CD8-positive, alpha-beta T cell (primary cell): ENCODE measurements at regions of chr2 and their contacts with region 1.

Region 1: DNA sequence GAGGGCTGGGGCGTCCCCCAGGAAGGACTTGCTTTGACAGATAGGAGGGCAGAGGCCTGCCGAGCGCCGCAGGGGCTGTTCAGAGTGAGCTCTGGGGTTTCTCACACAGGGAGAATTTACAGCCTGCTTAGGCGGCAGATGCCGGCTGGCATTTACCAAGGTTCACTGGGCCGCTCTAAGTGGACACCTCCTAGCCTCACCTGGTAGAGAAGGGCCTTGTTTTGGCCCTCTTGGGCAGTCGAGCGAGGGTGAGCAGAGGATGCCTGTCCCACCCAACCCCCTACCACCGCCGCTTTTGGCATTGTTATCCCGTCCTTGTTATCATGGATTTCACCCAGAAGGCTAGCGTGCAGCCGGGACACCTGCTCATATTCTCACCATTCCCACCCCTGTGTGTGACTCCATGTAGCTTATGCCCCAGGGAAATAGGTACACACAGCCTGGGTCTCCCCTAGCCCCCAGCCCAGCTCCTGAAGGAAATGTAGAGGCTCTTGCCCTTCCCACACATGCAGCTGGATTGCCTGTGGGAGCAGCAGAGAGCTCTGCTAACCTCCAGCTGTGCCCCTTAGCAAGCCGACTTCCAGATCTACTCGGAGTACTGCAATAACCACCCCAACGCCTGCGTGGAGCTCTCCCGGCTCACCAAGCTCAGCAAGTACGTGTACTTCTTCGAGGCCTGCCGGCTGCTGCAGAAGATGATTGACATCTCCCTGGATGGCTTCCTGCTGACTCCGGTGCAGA is 52.4 kb downstream of the FAM168B start:
- DNase-seq: peak in 5 of 9 experiments; percentile 27 to 57 (median 40)
- ATAC-seq: peak; percentile 53
- H3K4me3 ChIP-seq: peak overlapping the region; percentile 67 to 68
- H3K4me3 Mint-ChIP-seq: peak overlapping the region; percentile 93
- H3K27ac ChIP-seq: peak overlapping the region; percentile 46 to 56
- H3K27ac Mint-ChIP-seq: peak overlapping the region; percentile 86
- H3K4me1 ChIP-seq: peaks cover 33% of the 10 kb centered on the region
- H3K4me1 Mint-ChIP-seq: peaks cover 56% of the 10 kb centered on the region
- H3K27me3 ChIP-seq: no peaks in the 10 kb centered on the region
- H3K27me3 Mint-ChIP-seq: no peaks in the 10 kb centered on the region
- CTCF ChIP-seq: no peak

Region 2: DNA sequence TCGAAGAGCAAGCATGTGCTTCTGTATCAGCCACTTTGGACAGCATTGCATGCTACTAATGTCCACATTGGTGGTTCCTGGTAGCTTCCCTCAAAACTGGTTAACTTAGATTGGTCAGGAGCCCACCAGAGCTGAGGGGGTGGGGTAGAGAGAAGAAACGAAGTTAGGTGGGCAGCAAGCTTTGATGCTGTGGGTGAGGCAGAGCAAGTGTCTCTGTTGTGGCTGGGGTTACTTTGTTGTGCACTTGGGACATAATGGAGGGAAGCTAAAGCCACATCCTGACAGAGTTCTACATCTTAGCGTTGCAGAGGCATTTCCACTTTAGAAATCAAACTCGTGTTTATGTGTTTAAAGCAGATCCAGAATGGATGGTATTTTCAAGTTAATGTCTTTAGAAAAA is 30.3 kb before region 1 on chr2:
- CTCF ChIA-PET with region 1: interaction called, 4 read pairs
- POLR2A ChIA-PET with region 1: interaction called, 18 read pairs
- intact Hi-C with region 1: no loop called
- DNase-seq: peak in 4 of 9 experiments; percentile 20 to 66 (median 42)
- ATAC-seq: peak; percentile 78
- H3K4me3 ChIP-seq: peak overlapping the region in 1 of 2 experiments; percentile 10
- H3K4me3 Mint-ChIP-seq: peak overlapping the region; percentile 67
- H3K27ac ChIP-seq: no peak overlapping the region
- H3K27ac Mint-ChIP-seq: peak overlapping the region; percentile 53
- H3K4me1 ChIP-seq: peaks cover 29% of the 10 kb centered on the region
- H3K4me1 Mint-ChIP-seq: peaks cover 34% of the 10 kb centered on the region
- H3K27me3 ChIP-seq: no peaks in the 10 kb centered on the region
- H3K27me3 Mint-ChIP-seq: no peaks in the 10 kb centered on the region
- CTCF ChIP-seq: no peak